ENCODE measurements at regions of chr16 and their contacts with region 1.

Region 1: DNA sequence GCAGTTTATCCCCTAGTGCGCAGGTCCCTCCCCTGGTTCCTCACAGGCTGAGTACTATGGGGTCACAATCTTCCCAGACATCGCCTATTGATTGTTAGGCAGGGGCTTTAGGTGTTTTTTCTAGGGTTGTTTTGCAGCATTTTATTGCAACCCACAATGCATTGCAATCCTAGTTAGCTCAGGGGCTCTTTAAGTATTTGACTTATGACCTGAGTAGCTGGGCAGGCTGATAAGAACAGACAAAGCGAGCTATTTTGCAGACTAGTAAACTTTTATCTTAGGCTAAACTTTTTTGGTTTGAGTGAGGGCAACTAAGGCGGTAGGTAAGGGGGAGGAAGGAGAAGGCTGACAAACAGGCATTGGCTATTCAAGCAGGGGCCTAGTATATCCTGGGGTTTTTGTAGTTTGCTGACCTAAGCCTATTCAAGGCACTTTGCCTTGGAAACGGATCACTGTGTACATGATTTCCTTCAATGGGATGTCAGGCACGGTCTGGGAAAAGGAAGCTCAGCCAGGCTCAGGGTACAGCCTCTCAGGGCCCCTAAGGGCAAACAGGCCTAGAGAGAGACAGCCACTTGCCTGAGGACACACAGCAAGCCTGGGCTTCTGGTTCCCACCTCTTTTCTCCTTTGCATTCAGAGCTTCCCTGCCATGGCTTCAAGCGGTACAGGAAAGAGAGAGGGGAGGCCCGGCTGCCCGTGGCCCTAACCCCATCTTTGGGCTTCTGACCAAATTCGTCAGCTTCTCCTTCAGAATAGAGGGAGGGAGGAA is 6.4 kb downstream of the DRC7 start:
- DNase-seq: peak; percentile 86 to 88
- H3K4me3 ChIP-seq: no peak overlapping the region
- H3K4me3 Mint-ChIP-seq: peak overlapping the region; percentile 45
- H3K27ac Mint-ChIP-seq: peak overlapping the region; percentile 97
- H3K4me1 ChIP-seq: peaks cover 63% of the 10 kb centered on the region
- H3K4me1 Mint-ChIP-seq: peaks cover 35% of the 10 kb centered on the region
- H3K27me3 ChIP-seq: no peaks in the 10 kb centered on the region
- H3K27me3 Mint-ChIP-seq: no peaks in the 10 kb centered on the region
- CTCF ChIP-seq: no peak

Region 2: GRCh38 chr16:57667526-57668258 is 33.3 kb before region 1 on chr16:
- CTCF ChIA-PET with region 1: interaction called, 7 read pairs
- POLR2A ChIA-PET with region 1: no interaction called
- intact Hi-C with region 1: loop called (anchors 5 kb)
- DNase-seq: peak in 1 of 2 experiments; percentile 66
- H3K4me3 ChIP-seq: no peak overlapping the region
- H3K4me3 Mint-ChIP-seq: no peak overlapping the region
- H3K27ac Mint-ChIP-seq: no peak overlapping the region
- H3K4me1 ChIP-seq: peaks cover 15% of the 10 kb centered on the region
- H3K4me1 Mint-ChIP-seq: no peaks in the 10 kb centered on the region
- H3K27me3 ChIP-seq: no peaks in the 10 kb centered on the region
- H3K27me3 Mint-ChIP-seq: no peaks in the 10 kb centered on the region
- CTCF ChIP-seq: peak in 1 of 2 experiments; percentile 41

Region 3: GRCh38 chr16:57675741-57676584 is 25.0 kb before region 1 on chr16:
- CTCF ChIA-PET with region 1: interaction called, 5 read pairs
- POLR2A ChIA-PET with region 1: no interaction called
- intact Hi-C with region 1: loop called (anchors 2 kb)
- DNase-seq: peak in 1 of 2 experiments; percentile 42
- H3K4me3 ChIP-seq: no peak overlapping the region
- H3K4me3 Mint-ChIP-seq: no peak overlapping the region
- H3K27ac Mint-ChIP-seq: no peak overlapping the region
- H3K4me1 ChIP-seq: peaks cover 24% of the 10 kb centered on the region
- H3K4me1 Mint-ChIP-seq: peaks cover 23% of the 10 kb centered on the region
- H3K27me3 ChIP-seq: no peaks in the 10 kb centered on the region
- H3K27me3 Mint-ChIP-seq: no peaks in the 10 kb centered on the region
- CTCF ChIP-seq: no peak